Panc1 (cell line): ENCODE measurements at regions of chr10 and their contacts with region 1.

Region 1: DNA sequence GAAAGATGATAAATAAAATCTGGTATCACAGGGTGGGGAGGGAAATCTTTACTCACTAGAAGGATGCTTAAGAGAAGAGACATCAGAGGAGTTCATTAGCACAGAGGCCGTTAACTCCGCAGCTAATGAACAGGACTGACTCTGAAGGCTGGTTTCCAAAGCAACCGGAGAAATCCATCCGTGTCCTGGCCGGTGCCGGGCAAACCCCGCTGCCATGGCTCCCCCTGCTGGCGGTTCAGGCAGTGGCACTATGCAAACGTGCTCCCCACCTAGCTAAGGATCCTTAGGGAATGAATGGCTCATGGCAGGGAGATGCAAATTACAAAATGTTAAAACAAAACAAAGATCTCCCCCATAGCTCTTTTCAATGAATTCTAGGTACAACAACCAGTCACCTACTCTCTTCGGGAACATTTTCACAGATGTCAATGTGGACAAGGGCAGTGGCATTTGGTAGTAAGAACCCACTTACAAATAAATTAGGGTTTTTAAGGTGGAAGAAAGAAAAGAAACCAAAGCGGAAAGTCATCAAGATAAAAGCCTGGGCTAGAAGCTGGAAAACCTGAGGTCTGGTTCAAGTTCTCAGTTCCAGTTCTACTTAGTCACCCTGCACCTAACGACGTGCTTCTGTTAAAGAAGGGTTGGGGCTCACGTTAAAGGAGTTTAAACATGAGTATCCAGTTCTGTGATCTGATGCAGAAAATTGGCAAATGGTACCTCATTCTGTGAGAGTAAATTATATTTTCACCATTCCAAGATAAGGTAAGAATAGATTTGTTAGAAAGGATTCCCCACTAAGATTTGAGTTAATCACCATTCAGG is 138.2 kb downstream of the SVIL start:
- DNase-seq: no peak
- ATAC-seq: peak; percentile 97
- H3K4me3 ChIP-seq: no peak overlapping the region
- H3K27ac ChIP-seq: no peak overlapping the region
- H3K4me1 ChIP-seq: no peaks in the 10 kb centered on the region
- H3K27me3 ChIP-seq: no peaks in the 10 kb centered on the region
- CTCF ChIP-seq: peak; percentile 93

Region 2: DNA sequence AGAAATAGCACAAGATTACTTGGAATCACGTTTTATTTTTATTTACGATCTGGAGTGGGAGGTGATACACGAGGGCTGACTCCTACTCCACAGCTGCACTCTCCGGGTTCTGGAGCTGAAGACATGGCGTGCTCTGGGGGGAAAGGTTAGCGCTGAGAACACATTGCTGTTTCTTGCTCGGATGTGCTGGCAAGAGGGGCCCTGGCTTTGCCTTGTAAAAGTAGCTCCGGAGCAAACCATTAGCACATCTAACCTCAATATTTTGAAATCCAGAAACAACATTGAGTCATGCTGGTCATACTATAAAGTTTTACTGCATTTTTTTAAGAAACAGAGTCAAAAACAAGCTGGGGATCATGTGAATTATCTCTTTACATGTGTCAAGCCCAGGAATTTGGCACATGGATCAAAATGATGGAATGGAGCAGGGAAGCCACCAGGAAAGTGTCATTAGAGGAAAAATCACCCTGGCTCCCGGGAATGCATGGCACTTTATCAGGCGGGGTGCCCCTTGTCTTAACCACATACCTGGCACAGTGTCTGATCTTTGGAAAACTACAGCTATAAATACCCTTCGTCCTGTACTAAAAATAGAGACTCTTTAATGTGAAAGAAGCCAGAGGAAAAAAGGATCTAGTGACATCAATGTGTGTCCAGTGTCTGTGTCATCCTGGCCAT is 239.3 kb before region 1 on chr10:
- CTCF ChIA-PET with region 1: no interaction called
- POLR2A ChIA-PET with region 1: interaction called, 13 read pairs
- in situ Hi-C with region 1: no loop called
- intact Hi-C with region 1: no loop called
- DNase-seq: no peak
- ATAC-seq: peak; percentile 74
- H3K4me3 ChIP-seq: no peak overlapping the region
- H3K27ac ChIP-seq: peak overlapping the region; percentile 67
- H3K4me1 ChIP-seq: peaks cover 17% of the 10 kb centered on the region
- H3K27me3 ChIP-seq: no peaks in the 10 kb centered on the region
- CTCF ChIP-seq: no peak

Region 3: GRCh38 chr10:29921071-29921446 is 424.5 kb after region 1 on chr10:
- CTCF ChIA-PET with region 1: interaction called, 20 read pairs
- POLR2A ChIA-PET with region 1: no interaction called
- in situ Hi-C with region 1: no loop called
- intact Hi-C with region 1: no loop called
- DNase-seq: no peak
- ATAC-seq: no peak
- H3K4me3 ChIP-seq: no peak overlapping the region
- H3K27ac ChIP-seq: no peak overlapping the region
- H3K4me1 ChIP-seq: no peaks in the 10 kb centered on the region
- H3K27me3 ChIP-seq: no peaks in the 10 kb centered on the region
- CTCF ChIP-seq: no peak